ENCODE measurements at regions of chr17 and their contacts with region 1.

Region 1: DNA sequence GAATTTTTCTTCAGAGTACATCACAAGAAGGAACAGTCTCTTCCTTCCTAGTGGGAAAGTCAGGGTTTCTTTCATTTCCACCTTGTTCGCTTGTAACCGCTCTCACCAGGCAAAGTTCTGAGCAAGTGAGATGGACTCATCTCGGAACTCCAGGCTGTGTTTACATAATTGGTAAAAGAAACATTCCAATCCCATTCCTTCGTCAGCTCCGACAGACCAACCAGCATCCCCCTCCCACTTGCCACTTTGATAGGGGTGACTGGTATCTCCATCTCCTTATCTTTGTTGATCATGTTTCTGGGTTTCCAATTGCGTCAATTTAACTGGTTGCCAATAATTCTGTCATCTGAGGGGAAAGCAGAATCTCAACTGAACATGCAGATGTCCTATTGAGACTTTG is 36.8 kb upstream of the LYRM9 start:
- DNase-seq: no peak
- ATAC-seq: no peak
- H3K4me3 ChIP-seq: no peak overlapping the region
- H3K27ac ChIP-seq: no peak overlapping the region
- H3K4me1 ChIP-seq: no peaks in the 10 kb centered on the region
- H3K27me3 ChIP-seq: peaks cover 4% of the 10 kb centered on the region; the same call in 1 of the 2 replicates
- CTCF ChIP-seq: no peak

Region 2: GRCh38 chr17:27879987-27880608 is 49.9 kb before region 1 on chr17:
- CTCF ChIA-PET with region 1: no interaction called
- POLR2A ChIA-PET with region 1: no interaction called
- in situ Hi-C with region 1: no loop called
- intact Hi-C with region 1: no loop called
- DNase-seq: peak; percentile 38
- ATAC-seq: peak; percentile 98
- H3K4me3 ChIP-seq: no peak overlapping the region
- H3K27ac ChIP-seq: no peak overlapping the region
- H3K4me1 ChIP-seq: no peaks in the 10 kb centered on the region
- H3K27me3 ChIP-seq: no peaks in the 10 kb centered on the region
- CTCF ChIP-seq: peak; percentile 89

Region 3: DNA sequence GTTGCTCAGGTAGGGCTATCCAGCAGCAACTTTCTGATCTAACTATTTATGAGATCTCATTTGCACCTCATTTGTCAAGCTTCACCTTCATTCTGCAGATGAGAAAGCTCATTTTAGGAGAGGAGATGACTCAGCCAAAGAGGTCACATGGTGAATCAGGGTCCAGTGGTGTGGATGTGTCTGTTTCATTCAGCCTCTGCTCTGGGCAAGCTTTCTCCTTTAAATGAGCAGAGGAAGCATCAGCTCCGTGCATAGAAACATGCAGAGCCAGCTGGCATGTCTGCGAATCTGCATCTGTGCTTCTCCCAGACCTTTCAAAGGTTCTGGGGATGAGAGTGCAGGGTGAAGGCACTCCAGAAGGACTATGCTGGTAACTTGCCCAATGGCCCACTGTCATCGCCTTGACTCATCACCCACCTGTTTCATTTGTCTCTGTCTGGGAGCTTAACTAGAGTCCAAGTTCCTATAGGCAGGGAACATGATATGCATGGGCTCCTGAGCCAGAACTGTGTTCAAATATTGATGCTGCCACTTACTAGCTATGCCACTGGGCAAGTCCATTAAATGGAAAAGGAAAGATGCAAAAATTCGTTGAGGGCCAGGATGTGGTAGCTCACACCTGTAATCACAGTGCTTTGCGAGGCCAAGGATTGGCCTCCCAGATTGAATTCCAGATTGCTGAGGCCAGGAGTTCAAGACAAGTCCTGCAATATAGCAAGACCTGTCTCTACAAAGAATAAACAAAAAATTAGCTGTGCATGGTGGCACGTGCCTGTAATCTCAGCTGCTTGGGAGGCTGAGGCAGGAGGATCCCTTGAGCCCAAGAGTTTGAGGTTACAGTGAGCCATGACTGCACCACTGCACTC is 45.4 kb after region 1 on chr17:
- CTCF ChIA-PET with region 1: no interaction called
- POLR2A ChIA-PET with region 1: interaction called, 10 read pairs
- in situ Hi-C with region 1: no loop called
- intact Hi-C with region 1: no loop called
- DNase-seq: no peak
- ATAC-seq: no peak; the same call in 1 of the 2 replicates
- H3K4me3 ChIP-seq: no peak overlapping the region
- H3K27ac ChIP-seq: no peak overlapping the region
- H3K4me1 ChIP-seq: no peaks in the 10 kb centered on the region
- H3K27me3 ChIP-seq: peaks cover 5% of the 10 kb centered on the region
- CTCF ChIP-seq: no peak

Region 4: GRCh38 chr17:28057731-28058279 is 127.8 kb after region 1 on chr17:
- CTCF ChIA-PET with region 1: no interaction called
- POLR2A ChIA-PET with region 1: no interaction called
- in situ Hi-C with region 1: no loop called
- intact Hi-C with region 1: no loop called
- DNase-seq: no peak
- ATAC-seq: no peak
- H3K4me3 ChIP-seq: no peak overlapping the region
- H3K27ac ChIP-seq: no peak overlapping the region
- H3K4me1 ChIP-seq: peaks cover 28% of the 10 kb centered on the region
- H3K27me3 ChIP-seq: no peaks in the 10 kb centered on the region
- CTCF ChIP-seq: no peak